Right ventricle myocardium superior (tissue), 1 donor: ENCODE measurements at regions of chr3 and their contacts with region 1.

Region 1: DNA sequence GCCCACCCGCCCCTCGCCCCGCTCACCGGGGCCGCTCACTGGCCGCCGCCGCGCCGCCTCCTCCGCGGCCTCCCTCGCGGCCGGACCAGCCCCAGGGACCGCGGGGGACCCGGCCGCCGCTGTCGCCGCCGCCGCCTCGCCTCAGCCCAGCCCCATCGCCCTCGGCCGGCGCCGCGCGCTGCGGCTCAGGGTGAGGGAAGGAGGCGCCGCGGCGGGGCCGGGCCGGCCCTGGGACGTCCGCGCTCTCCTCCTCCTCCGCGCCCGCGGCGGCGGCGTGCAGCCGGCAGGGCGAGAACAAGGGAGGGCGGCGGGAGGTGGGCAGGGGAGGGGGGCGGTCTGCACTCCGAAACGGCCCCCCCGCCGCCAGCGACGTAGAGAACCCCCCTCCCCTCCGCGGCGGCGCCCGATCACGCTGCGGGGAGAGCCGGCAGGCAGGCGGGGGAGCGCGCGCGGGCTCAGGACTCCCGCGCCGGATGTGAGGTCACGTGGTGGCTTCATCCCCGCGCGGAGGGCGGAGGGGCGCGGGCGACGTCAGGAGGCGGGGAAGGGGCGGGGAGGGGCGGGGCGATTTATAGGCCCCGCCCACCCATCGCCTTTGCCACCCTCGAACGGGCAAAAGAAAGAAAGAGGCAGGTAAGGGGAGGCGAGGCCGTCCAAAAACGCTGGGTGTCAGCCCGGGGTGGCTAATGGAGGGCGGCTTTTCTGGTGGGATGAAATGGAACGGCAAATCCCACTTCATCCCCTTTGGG is at the start of gene ATP13A3:
- DNase-seq: peak; percentile 93
- ATAC-seq: peak; percentile 97
- total RNA-seq, gene ATP13A3: 60.4 TPM

Region 2: DNA sequence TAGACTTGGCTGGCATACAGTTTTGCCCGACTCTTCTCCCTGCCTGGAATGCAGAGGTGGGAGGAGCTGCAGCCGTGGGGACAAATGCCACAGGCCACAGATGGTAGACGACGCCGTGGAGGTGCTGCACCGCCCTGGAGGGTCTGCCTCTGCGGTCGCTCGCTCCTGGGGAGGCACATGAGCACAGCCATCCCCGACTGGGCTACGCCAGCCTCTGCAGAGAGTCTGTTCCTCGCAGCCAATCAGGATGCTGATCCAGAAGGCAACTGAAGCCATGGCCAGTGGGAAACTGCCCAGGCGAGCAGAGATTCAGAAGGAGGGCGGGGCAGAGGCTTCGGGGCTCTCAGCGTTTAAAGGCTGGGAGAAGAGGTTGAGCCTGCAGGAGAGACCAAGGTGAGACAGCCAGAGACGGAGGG is 105.2 kb before region 1 on chr3:
- intact Hi-C with region 1: no loop called
- DNase-seq: no peak
- ATAC-seq: no peak

Region 3: GRCh38 chr3:194583604-194584318 is 97.0 kb after region 1 on chr3:
- intact Hi-C with region 1: loop called (anchors 5 kb)
- DNase-seq: peak; percentile 96
- ATAC-seq: peak; percentile 95

Region 4: DNA sequence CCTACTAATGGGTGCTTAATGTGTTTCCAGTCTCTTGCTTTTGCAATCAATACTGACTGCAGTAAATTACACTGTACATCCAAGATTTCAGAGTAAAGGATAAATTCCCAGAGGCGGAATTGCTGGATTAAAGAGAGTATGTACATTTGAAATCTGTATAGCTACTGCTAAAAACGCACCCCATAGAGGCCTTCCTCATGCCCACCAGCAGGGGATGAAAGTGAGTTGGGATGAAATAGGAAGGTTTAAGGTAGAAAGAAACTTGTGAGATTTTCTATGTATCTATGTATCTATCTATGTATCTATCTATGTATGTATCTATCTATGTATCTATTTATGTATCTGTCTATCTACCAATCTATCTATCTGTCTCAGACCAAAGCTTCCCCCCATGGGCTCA is 118.1 kb after region 1 on chr3:
- intact Hi-C with region 1: no loop called
- DNase-seq: no peak
- ATAC-seq: no peak